OCI-LY7 (cell line): ENCODE measurements at regions of chr12 and their contacts with region 1.

Region 1: GRCh38 chr12:53267999-53268647 is at the start of gene ESPL1:
- DNase-seq: peak; percentile 94
- H3K4me3 ChIP-seq: peak within 1 kb of the TSS; percentile 87
- H3K27ac ChIP-seq: peak within 1 kb of the TSS; percentile 56
- H3K4me1 ChIP-seq: peaks cover 31% of the 10 kb centered on the region
- CTCF ChIP-seq: peak; percentile 83
- total RNA-seq, gene ESPL1: 77.4 and 78.2 TPM in 2 replicates

Region 2: DNA sequence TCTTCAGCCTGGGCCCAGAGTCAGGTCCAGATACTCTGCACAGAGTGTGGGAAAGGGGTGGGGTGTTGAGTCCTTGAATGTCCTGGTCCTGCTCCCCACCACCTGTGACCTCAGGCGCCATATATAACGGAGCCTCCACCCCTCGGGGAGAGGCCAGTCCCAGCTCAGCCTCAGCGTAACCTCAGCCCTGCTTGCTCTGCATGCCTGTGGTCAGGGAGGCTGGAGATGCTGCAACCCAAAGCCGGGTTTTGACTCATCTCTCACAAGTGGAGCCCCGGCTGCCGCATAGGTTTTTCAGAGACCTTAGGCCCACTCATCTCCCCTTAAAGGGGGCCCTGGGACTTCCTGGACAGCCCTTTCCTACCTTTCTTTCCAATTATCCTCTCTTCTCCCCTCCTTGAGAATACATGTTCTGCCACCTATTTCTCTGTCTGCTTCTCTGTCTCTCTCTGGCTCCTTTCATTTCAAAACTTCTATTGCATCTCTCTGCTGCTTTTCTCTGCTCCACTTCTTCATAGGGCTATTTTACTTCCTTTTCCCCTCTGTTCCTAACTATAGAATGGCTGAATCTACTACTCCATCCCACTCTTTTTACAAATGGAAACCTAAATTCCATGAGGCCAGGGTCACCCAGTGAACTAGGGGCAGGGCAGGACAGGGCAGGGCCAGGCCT is 62.2 kb before region 1 on chr12:
- CTCF ChIA-PET with region 1: interaction called, 80 read pairs
- POLR2A ChIA-PET with region 1: interaction called, 43 read pairs
- intact Hi-C with region 1: loop called (anchors 1 kb)
- DNase-seq: peak; percentile 74
- H3K4me3 ChIP-seq: peak overlapping the region; percentile 83
- H3K27ac ChIP-seq: peak overlapping the region; percentile 98
- H3K4me1 ChIP-seq: peaks cover 79% of the 10 kb centered on the region
- CTCF ChIP-seq: no peak

Region 3: DNA sequence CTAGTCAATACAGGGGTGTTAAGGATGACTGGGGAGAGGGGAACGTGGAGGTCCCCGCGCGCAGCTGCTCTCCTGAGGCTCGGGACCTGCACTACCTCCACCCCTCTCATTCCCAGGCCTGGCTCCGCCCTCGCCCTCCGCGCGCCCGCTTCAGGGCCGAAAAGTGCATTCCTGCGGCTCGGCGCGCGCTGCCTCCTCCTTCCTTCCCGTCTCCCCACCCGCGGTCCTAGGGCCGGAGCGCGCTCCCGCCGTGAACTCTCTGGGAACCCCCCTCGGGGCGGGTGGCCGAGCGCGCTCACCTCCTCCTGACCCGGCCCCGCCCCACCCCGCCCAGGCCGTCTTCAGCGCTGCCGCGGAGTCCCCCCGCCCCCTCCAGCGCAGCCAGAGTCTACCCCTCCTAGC is 47.3 kb before region 1 on chr12:
- CTCF ChIA-PET with region 1: interaction called, 80 read pairs
- POLR2A ChIA-PET with region 1: interaction called, 41 read pairs
- intact Hi-C with region 1: loop called (anchors 1 kb)
- DNase-seq: peak; percentile 90
- H3K4me3 ChIP-seq: peak overlapping the region; percentile 74
- H3K27ac ChIP-seq: peak overlapping the region; percentile 90
- H3K4me1 ChIP-seq: peaks cover 72% of the 10 kb centered on the region
- CTCF ChIP-seq: no peak

Region 4: GRCh38 chr12:53279283-53279869 is 11.3 kb after region 1 on chr12:
- CTCF ChIA-PET with region 1: interaction called, 3 read pairs
- POLR2A ChIA-PET with region 1: interaction called, 16 read pairs
- intact Hi-C with region 1: no loop called
- DNase-seq: no peak
- H3K4me3 ChIP-seq: no peak overlapping the region
- H3K27ac ChIP-seq: no peak overlapping the region
- H3K4me1 ChIP-seq: no peaks in the 10 kb centered on the region
- CTCF ChIP-seq: no peak